ENCODE measurements at regions of chr5 and their contacts with region 1.

Region 1: GRCh38 chr5:135829681-135830383 is 4.6 kb upstream of the SLC25A48 start:
- DNase-seq: peak; percentile 40
- H3K4me3 ChIP-seq: no peak overlapping the region
- H3K27ac ChIP-seq: no peak overlapping the region
- H3K4me1 ChIP-seq: no peaks in the 10 kb centered on the region
- H3K27me3 ChIP-seq: peaks cover 1 to 4% of the 10 kb centered on the region in 2 experiments
- CTCF ChIP-seq: peak; percentile 81 to 85
- POLR2A ChIP-seq: no peak

Region 2: GRCh38 chr5:135457424-135458071 is 372.3 kb before region 1 on chr5:
- CTCF ChIA-PET with region 1: interaction called, 13 read pairs
- POLR2A ChIA-PET with region 1: no interaction called
- dilution Hi-C with region 1: no loop called
- intact Hi-C with region 1: loop called (anchors 1 kb)
- DNase-seq: peak; percentile 50
- H3K4me3 ChIP-seq: no peak overlapping the region
- H3K27ac ChIP-seq: no peak overlapping the region
- H3K4me1 ChIP-seq: no peaks in the 10 kb centered on the region
- H3K27me3 ChIP-seq: peaks cover 17 to 22% of the 10 kb centered on the region in 2 experiments
- CTCF ChIP-seq: peak; percentile 90 to 91
- POLR2A ChIP-seq: no peak

Region 3: GRCh38 chr5:135560858-135561257 is 269.0 kb before region 1 on chr5:
- CTCF ChIA-PET with region 1: interaction called, 120 read pairs
- POLR2A ChIA-PET with region 1: no interaction called
- dilution Hi-C with region 1: no loop called
- intact Hi-C with region 1: loop called (anchors 1 kb)
- DNase-seq: peak; percentile 54
- H3K4me3 ChIP-seq: no peak overlapping the region
- H3K27ac ChIP-seq: no peak overlapping the region
- H3K4me1 ChIP-seq: no peaks in the 10 kb centered on the region
- H3K27me3 ChIP-seq: peaks cover 10 to 21% of the 10 kb centered on the region in 2 experiments
- CTCF ChIP-seq: peak; percentile 83 to 84
- POLR2A ChIP-seq: no peak

Region 4: GRCh38 chr5:135578685-135579341 is 251.0 kb before region 1 on chr5 and contains the start of gene CXCL14:
- CTCF ChIA-PET with region 1: no interaction called
- POLR2A ChIA-PET with region 1: no interaction called
- dilution Hi-C with region 1: loop called (anchors 25 kb)
- intact Hi-C with region 1: no loop called
- DNase-seq: no peak
- H3K4me3 ChIP-seq: no peak within 1 kb of the TSS
- H3K27ac ChIP-seq: no peak within 1 kb of the TSS
- H3K4me1 ChIP-seq: no peaks in the 10 kb centered on the region
- H3K27me3 ChIP-seq: peaks cover 34 to 40% of the 10 kb centered on the region in 2 experiments
- CTCF ChIP-seq: no peak
- POLR2A ChIP-seq: no peak
- total RNA-seq, gene CXCL14: not detected in 2 replicates

Region 5: DNA sequence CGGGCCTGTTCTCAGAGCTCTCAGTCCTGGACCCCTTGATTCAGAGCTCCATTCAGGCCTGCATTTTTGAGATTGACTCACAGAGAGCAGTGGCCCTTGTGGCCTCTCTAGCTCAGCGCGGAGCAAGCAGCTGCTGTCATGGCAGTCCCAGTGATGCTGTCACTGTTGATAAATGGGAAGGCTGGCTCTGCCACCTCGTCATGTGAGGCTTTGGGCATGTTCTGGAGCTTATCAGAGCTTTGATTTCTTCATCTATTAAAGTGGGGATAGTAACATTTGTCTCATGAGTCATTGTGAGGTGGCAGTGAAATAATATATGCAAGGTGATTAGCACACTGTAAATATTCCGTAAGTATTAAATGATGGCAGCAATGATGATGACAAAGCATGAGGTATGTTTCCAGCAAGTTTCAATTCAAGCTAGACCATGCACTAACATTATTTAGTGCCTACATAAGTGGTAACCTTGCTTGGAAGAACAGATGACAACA is 124.6 kb before region 1 on chr5:
- CTCF ChIA-PET with region 1: no interaction called
- POLR2A ChIA-PET with region 1: no interaction called
- dilution Hi-C with region 1: no loop called
- intact Hi-C with region 1: no loop called
- DNase-seq: no peak
- H3K4me3 ChIP-seq: no peak overlapping the region
- H3K27ac ChIP-seq: no peak overlapping the region
- H3K4me1 ChIP-seq: no peaks in the 10 kb centered on the region
- H3K27me3 ChIP-seq: no peaks in the 10 kb centered on the region
- CTCF ChIP-seq: no peak
- POLR2A ChIP-seq: no peak

Region 6: DNA sequence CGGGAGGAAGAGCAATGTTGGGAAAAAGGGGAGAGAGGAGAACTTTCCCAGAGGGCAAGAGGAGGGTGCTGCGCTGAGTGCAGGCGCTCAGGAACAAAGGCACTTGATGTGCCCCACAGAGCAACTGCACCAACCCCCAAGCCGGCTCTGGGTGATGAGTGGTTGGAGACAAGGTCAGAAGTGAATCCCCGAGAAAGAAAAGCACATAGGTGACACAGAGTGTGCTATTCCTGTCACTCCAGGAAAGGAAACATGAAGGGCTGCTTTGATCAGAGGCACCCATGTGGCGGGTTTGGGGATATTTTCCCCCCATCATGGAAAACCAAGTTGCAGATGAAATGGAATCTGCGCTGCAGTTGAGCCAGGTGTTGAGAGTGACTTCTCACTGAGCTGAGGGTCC is 16.1 kb before region 1 on chr5:
- CTCF ChIA-PET with region 1: interaction called, 18 read pairs
- POLR2A ChIA-PET with region 1: no interaction called
- dilution Hi-C with region 1: no loop called
- intact Hi-C with region 1: no loop called
- DNase-seq: no peak
- H3K4me3 ChIP-seq: no peak overlapping the region
- H3K27ac ChIP-seq: no peak overlapping the region
- H3K4me1 ChIP-seq: no peaks in the 10 kb centered on the region
- H3K27me3 ChIP-seq: peaks cover 2 to 6% of the 10 kb centered on the region in 2 experiments
- CTCF ChIP-seq: no peak
- POLR2A ChIP-seq: no peak

Region 7: GRCh38 chr5:135887351-135887864 is 57.6 kb after region 1 on chr5:
- CTCF ChIA-PET with region 1: no interaction called
- POLR2A ChIA-PET with region 1: no interaction called
- dilution Hi-C with region 1: no loop called
- intact Hi-C with region 1: no loop called
- DNase-seq: peak; percentile 61
- H3K4me3 ChIP-seq: no peak overlapping the region
- H3K27ac ChIP-seq: no peak overlapping the region
- H3K4me1 ChIP-seq: no peaks in the 10 kb centered on the region
- H3K27me3 ChIP-seq: peaks cover 0 to 3% of the 10 kb centered on the region in 2 experiments
- CTCF ChIP-seq: peak; percentile 71 to 76
- POLR2A ChIP-seq: no peak

Measured in endothelial cell of umbilical vein (primary cell).